ENCODE measurements at regions of chr15 and their contacts with region 1.

Region 1: DNA sequence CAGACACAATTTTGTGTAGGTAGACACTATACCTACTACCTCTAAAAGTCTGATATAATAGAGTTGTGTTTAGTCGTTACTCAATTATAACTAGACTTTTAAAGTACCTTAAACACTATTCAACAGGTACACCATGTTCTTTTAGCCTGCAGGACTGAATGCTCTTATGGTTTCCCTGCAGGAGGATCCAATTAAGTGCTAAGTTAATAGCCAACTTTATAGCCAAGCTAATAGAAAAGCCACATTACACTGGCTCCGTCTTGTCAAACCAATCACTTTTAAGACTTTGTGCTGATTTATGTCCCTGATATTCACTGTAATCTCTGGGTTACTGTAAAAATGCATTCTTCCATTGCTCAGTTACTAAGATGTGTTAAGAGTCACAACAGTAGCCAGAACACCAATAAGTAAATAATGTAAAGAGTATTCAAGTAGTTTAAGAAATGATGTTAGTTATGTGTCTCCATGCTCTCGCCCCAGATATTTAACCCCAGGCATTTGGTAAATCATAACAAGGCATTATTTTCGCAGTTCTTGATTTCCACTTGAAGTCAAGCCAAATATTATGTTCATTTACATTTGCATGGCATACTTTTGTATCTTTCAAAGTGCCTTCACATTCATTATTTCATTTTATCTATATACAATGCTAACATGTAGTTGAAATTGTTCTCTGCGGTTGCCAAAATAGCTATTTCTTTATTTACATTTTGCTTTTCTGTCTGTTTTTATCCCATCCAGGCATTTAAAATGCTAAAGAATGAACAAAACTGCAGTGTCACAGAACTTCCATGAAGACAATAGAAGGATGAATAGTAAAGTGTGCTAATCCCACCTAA is 42.7 kb upstream of the AP4E1 start:
- DNase-seq: no peak
- H3K4me3 Mint-ChIP-seq: no peak overlapping the region
- H3K27ac Mint-ChIP-seq: no peak overlapping the region
- H3K4me1 Mint-ChIP-seq: no peaks in the 10 kb centered on the region
- H3K27me3 Mint-ChIP-seq: peaks cover 12% of the 10 kb centered on the region

Region 2: DNA sequence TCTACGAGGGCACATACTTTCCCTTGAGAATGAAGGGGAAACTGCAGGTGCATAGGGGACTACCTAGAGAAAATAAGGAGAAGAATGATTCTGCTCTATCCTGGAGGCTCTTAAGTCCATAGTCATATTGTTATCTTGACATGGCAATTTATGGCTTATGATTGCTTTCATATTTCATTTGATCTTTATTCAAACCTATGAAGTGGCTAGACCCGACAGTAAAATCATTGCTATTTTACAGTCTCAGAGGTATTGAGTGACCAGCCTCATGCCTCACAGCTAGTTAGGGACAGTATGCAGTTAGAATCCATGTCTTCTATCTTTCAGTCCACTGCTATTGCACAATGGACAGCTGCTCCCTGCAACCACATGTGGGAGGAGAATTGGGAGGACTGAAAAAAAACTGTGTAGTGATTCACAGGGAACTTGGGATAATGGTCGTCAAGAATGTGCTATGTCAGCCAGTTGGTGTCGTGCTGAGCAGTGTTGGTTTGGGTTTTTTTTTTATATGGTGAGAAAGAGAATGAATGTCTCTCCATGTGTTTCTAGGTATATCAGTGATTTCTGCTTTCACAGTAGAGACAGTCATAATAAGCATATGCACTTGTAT is 37.0 kb before region 1 on chr15:
- CTCF ChIA-PET with region 1: no interaction called
- POLR2A ChIA-PET with region 1: no interaction called
- DNase-seq: no peak
- H3K4me3 Mint-ChIP-seq: no peak overlapping the region
- H3K27ac Mint-ChIP-seq: no peak overlapping the region
- H3K4me1 Mint-ChIP-seq: no peaks in the 10 kb centered on the region
- H3K27me3 Mint-ChIP-seq: peaks cover 9% of the 10 kb centered on the region

Region 3: DNA sequence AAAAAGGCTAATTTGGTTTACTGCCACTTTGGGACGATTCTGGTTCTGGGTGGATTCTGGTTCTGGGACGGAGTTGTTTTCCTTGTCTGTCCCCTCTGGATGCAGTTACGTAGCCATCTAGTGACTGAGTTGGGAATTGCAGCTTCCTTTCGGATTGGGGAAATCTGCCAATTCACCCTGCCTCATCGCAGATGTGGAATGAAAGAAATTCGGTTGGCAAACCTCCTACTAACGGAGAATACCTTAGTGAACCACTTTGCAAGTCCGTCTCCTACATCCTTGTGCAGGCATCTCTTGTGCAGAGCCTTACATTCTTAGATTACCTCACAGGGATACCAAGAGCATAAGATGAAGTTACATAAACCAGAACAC is 11.2 kb after region 1 on chr15:
- CTCF ChIA-PET with region 1: interaction called, 11 read pairs
- POLR2A ChIA-PET with region 1: no interaction called
- DNase-seq: peak; percentile 82
- H3K4me3 Mint-ChIP-seq: peak overlapping the region; percentile 64
- H3K27ac Mint-ChIP-seq: peak overlapping the region; percentile 46
- H3K4me1 Mint-ChIP-seq: peaks cover 50% of the 10 kb centered on the region
- H3K27me3 Mint-ChIP-seq: peaks cover 10% of the 10 kb centered on the region

Region 4: GRCh38 chr15:50996641-50997040 is 130.9 kb after region 1 on chr15:
- CTCF ChIA-PET with region 1: no interaction called
- POLR2A ChIA-PET with region 1: no interaction called
- DNase-seq: no peak
- H3K4me3 Mint-ChIP-seq: no peak overlapping the region
- H3K27ac Mint-ChIP-seq: no peak overlapping the region
- H3K4me1 Mint-ChIP-seq: no peaks in the 10 kb centered on the region
- H3K27me3 Mint-ChIP-seq: no peaks in the 10 kb centered on the region

Measured in activated CD4-positive, alpha-beta T cell treated with anti-CD3 and anti-CD28 coated beads, Interleukin-2, amount 10 ng/mL, durations not matched to agents 7 days and 5 days (primary cell).